Lower leg skin (tissue), 4 donors: ENCODE measurements at regions of chr1 and their contacts with region 1.

Region 1: DNA sequence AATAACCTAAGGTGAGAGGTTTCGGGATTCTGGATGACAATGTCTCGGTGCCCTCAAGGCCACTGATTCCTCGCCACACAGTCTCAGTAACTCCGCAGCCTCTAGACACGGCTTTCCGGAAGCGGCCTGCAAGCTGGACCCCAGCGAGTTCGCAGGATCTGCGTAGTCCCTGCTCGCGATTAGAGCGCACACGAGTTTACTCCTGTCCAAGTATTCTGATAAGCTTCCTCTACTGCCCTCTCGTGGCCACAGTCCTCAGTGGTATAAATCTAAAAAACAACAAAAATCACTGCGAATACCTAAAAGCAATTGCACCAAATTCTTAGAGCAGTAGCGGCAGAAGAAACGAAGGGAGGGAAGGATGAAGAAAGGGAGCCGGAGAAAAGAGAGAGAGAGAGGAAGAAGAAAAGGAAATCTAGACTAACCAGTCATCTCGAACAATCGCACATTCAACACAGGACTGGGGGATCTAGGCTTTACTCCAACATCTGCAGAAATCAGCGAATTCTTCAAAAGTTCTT is 1.1 kb upstream of the PLXNA2 start:
- DNase-seq: peak; percentile 93 to 97
- H3K4me3 ChIP-seq: no peak overlapping the region
- CTCF ChIP-seq: peak in 1 of 3 donors; percentile 80
- POLR2A ChIP-seq: no peak

Region 2: GRCh38 chr1:207787776-207788175 is 457.5 kb before region 1 on chr1:
- intact Hi-C with region 1: no loop called
- DNase-seq: no peak
- H3K4me3 ChIP-seq: no peak overlapping the region
- CTCF ChIP-seq: no peak
- POLR2A ChIP-seq: no peak

Region 3: GRCh38 chr1:208025031-208025430 is 220.2 kb before region 1 on chr1:
- intact Hi-C with region 1: loop called (anchors 2 kb)
- DNase-seq: no peak
- H3K4me3 ChIP-seq: no peak overlapping the region
- CTCF ChIP-seq: no peak
- POLR2A ChIP-seq: no peak

Region 4: GRCh38 chr1:208174200-208174599 is 71.0 kb before region 1 on chr1:
- intact Hi-C with region 1: no loop called
- DNase-seq: no peak
- H3K4me3 ChIP-seq: no peak overlapping the region
- CTCF ChIP-seq: no peak
- POLR2A ChIP-seq: no peak

Region 5: GRCh38 chr1:208184088-208184911 is 60.9 kb before region 1 on chr1:
- intact Hi-C with region 1: no loop called
- DNase-seq: peak; percentile 87 to 88
- H3K4me3 ChIP-seq: no peak overlapping the region
- CTCF ChIP-seq: no peak
- POLR2A ChIP-seq: no peak

Region 6: DNA sequence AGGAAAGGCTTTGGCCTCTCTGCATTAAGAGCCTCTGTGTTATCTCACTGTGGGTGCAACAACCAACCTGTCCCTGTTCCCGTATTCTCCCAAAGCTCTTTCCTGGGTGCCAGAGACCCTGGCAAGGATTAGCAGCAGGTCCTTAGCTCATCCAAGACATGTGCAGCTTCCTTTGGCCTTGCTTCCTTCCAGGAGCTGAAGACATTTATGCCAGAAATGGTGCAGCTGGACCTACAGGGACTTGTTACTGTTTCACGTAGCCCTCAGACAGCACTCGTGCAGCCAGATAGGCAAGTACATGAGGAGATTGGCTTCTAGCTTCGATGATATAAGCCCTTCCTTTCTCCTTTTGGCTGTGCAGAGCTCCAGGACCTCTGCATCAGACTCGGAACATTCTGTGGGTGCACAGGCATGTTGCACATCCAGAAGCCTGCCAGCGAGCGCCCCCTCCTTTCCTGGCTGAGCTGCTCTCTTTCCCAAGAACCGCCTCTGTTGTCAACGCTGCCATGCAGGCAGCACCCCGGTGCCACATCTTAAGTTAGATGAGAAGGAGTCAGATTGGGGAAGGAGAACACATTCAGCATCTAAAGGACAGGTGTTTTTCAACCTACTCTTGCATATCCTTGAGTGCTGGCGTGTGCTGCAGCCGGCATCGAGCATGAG is 283.5 kb after region 1 on chr1:
- intact Hi-C with region 1: no loop called
- DNase-seq: no peak
- H3K4me3 ChIP-seq: no peak overlapping the region
- CTCF ChIP-seq: no peak
- POLR2A ChIP-seq: no peak